ENCODE measurements at regions of chr19 and their contacts with region 1.

Region 1: GRCh38 chr19:16111160-16111908 is at the start of gene RAB8A:
- H3K4me3 Mint-ChIP-seq: peak within 1 kb of the TSS; percentile 94
- H3K27ac Mint-ChIP-seq: peak within 1 kb of the TSS; percentile 99
- H3K4me1 Mint-ChIP-seq: peaks cover 39% of the 10 kb centered on the region
- H3K27me3 Mint-ChIP-seq: no peaks in the 10 kb centered on the region

Region 2: GRCh38 chr19:16041299-16041990 is 69.9 kb before region 1 on chr19:
- intact Hi-C with region 1: loop called (anchors 5 kb)
- H3K4me3 Mint-ChIP-seq: peak overlapping the region; percentile 6
- H3K27ac Mint-ChIP-seq: no peak overlapping the region
- H3K4me1 Mint-ChIP-seq: peaks cover 8% of the 10 kb centered on the region
- H3K27me3 Mint-ChIP-seq: peaks cover 6% of the 10 kb centered on the region

Region 3: GRCh38 chr19:16076958-16077611 is 34.2 kb before region 1 on chr19:
- intact Hi-C with region 1: loop called (anchors 1 kb)
- H3K4me3 Mint-ChIP-seq: peak overlapping the region; percentile 82
- H3K27ac Mint-ChIP-seq: peak overlapping the region; percentile 98
- H3K4me1 Mint-ChIP-seq: peaks cover 69% of the 10 kb centered on the region
- H3K27me3 Mint-ChIP-seq: no peaks in the 10 kb centered on the region

Measured in dendritic cell treated with granulocyte-macrophage colony-stimulating factor and Interleukin-4, amounts not matched to agents 40 ng/mL and 50 ng/mL, for 4 days (primary cell).